ENCODE measurements at regions of chr22 and their contacts with region 1.

Region 1: GRCh38 chr22:46563381-46564083 is 26.1 kb upstream of the CELSR1 start:
- DNase-seq: no peak
- ATAC-seq: peak; percentile 97
- H3K4me3 ChIP-seq: no peak overlapping the region; the same call in 1 of the 2 replicates
- H3K27ac ChIP-seq: peak overlapping the region; percentile 50; the same call in 1 of the 2 replicates
- H3K4me1 ChIP-seq: peaks cover 12% of the 10 kb centered on the region
- H3K27me3 ChIP-seq: no peaks in the 10 kb centered on the region
- CTCF ChIP-seq: peak; percentile 80 to 93 (median 84)
- EP300 ChIP-seq: no peak
- POLR2A ChIP-seq: no peak
- RAD21 ChIP-seq: peak; percentile 81

Region 2: DNA sequence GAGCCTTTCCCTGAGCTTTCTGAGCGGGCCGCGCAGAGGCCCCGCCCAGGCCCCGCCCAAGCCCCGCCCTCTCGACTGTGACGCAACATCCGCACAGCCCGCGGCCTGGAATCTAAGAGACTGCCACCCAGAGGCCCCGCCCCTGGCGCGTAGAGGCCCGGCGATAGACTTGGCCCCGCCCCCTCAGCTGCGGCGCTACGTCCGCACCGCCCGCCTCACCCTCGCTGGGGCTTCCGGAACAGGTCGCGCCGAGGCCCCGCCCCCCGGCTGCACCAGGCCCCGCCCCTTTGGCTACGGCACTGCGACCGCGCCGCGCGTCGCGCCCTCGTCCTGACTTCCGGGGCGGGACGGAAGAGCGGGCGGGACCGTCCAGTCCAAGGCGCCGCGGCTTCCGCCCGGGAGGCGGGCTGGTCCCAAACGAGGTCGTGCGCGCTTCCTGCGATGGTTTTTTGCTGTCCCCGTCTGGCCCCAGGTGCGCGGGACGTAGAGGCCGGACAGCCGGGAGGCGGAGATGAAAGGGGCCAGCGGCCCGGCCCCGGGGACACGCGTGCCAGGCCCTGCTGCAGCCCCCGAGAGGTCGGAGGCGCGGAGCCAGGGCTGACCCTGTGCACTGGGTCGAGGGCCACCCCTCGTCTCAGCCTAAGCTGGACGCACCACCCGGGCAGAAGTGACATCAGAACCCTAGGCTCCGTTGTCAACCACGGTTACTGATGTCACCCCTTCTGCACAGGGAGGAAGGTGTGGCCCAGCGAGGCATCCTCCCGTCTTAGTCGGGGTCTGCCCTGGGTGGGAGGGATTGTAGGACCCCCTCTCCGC is 527.6 kb before region 1 on chr22:
- CTCF ChIA-PET with region 1: no interaction called
- POLR2A ChIA-PET with region 1: no interaction called
- RAD21 ChIA-PET with region 1: no interaction called
- SMC1A ChIA-PET with region 1: no interaction called
- in situ Hi-C with region 1: no loop called
- intact Hi-C with region 1: no loop called
- DNase-seq: peak; percentile 85
- ATAC-seq: peak; percentile 97
- H3K4me3 ChIP-seq: peak overlapping the region; percentile 91
- H3K27ac ChIP-seq: peak overlapping the region; percentile 88
- H3K4me1 ChIP-seq: peaks cover 9% of the 10 kb centered on the region
- H3K27me3 ChIP-seq: no peaks in the 10 kb centered on the region; a peak in 1 of 4 replicates
- CTCF ChIP-seq: no peak
- EP300 ChIP-seq: no peak; a peak in 1 of 4 replicates
- POLR2A ChIP-seq: peak; percentile 96
- RAD21 ChIP-seq: no peak

Region 3: DNA sequence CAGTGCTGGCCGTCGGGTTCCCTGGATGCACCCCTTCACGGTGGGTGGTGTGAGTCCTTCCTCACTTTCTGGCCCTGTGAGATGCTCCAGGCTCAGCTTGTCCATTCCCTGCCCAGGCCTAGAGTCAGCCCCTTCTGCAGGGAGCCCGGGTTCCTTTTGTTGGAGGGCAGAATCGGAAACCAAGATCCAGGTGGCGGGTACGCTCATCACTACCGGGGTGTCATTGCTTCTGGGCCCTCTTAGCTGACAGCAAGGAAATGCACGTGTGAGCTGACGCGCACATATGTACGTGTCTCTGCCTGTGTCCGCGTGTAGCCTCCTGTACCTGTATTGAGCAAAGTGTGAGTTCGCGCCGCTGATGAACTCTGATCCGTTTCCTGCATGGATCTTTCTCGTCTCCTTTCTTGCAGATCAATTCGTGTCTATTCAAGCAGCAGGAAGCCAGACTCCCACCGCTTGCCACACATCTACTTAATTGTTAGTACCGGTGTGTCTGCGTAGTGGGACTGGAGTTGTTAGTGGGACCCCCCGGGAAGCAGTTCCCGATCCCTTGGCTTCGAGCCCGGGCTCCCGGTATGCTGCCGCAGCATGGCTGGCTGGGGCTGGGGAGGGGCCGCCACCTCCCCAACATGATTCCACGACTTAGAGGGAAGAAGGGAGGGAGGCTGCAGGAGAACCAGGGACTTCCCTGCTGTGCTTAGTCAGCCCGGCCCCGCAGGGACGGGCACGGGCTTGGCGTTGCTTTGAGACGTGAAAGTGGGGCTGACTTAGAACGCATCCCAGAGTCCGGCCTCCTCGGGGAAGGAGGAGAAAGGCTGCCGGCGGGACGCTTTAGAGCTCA is 20.8 kb after region 1 on chr22:
- CTCF ChIA-PET with region 1: interaction called, 19 read pairs
- POLR2A ChIA-PET with region 1: interaction called, 3 read pairs
- RAD21 ChIA-PET with region 1: interaction called, 13 read pairs
- SMC1A ChIA-PET with region 1: interaction called, 13 read pairs
- in situ Hi-C with region 1: no loop called
- intact Hi-C with region 1: no loop called
- DNase-seq: no peak
- ATAC-seq: no peak
- H3K4me3 ChIP-seq: no peak overlapping the region
- H3K27ac ChIP-seq: no peak overlapping the region
- H3K4me1 ChIP-seq: peaks cover 50% of the 10 kb centered on the region
- H3K27me3 ChIP-seq: no peaks in the 10 kb centered on the region
- CTCF ChIP-seq: no peak
- EP300 ChIP-seq: no peak
- POLR2A ChIP-seq: no peak
- RAD21 ChIP-seq: no peak

Region 4: DNA sequence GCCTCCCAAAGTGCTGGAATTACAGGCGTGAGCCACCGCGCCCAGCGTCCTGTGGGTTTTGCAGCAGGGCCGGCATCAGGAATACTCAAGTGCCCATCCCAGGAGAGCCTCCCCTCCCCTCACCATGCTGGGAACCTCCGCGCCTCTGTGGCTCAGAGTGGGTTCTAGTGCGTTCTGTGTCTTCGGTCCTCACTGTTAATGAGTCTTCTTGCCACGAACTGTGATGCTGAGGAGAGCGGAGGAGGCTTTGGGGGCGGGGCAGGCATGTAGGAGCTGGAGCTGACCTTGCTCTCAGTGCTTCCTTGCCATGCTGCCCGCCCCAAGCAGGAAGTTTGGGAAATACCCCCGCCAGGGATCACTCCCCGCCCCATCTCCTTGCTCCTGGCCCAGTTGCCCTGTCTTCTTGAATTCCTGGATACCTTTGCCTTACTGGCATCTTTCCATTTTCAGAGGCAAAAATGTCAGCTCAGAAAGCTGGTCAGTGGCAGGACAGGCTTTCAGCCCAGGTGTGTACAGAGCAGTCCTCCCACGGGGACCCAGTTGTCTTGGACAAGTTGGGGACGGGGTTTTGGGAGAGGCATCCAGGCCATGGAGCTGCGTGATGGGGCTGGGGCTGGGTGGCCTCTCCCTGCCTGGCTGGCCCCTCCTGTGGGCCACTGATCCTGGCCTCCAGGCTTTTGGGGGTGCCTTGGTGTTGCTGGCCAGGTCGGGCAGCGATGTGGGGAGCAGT is 61.7 kb after region 1 on chr22:
- CTCF ChIA-PET with region 1: interaction called, 19 read pairs
- POLR2A ChIA-PET with region 1: no interaction called
- RAD21 ChIA-PET with region 1: interaction called, 4 read pairs
- SMC1A ChIA-PET with region 1: interaction called, 3 read pairs
- in situ Hi-C with region 1: no loop called
- intact Hi-C with region 1: no loop called
- DNase-seq: no peak
- ATAC-seq: no peak
- H3K4me3 ChIP-seq: no peak overlapping the region
- H3K27ac ChIP-seq: no peak overlapping the region
- H3K4me1 ChIP-seq: no peaks in the 10 kb centered on the region
- H3K27me3 ChIP-seq: no peaks in the 10 kb centered on the region
- CTCF ChIP-seq: no peak
- EP300 ChIP-seq: no peak
- POLR2A ChIP-seq: no peak
- RAD21 ChIP-seq: no peak

Region 5: GRCh38 chr22:46693634-46694415 is 130.3 kb after region 1 on chr22:
- CTCF ChIA-PET with region 1: interaction called, 11 read pairs
- POLR2A ChIA-PET with region 1: no interaction called
- RAD21 ChIA-PET with region 1: no interaction called
- SMC1A ChIA-PET with region 1: no interaction called
- in situ Hi-C with region 1: no loop called
- intact Hi-C with region 1: no loop called
- DNase-seq: no peak
- ATAC-seq: no peak
- H3K4me3 ChIP-seq: no peak overlapping the region
- H3K27ac ChIP-seq: no peak overlapping the region
- H3K4me1 ChIP-seq: no peaks in the 10 kb centered on the region
- H3K27me3 ChIP-seq: no peaks in the 10 kb centered on the region
- CTCF ChIP-seq: no peak
- EP300 ChIP-seq: no peak
- POLR2A ChIP-seq: no peak
- RAD21 ChIP-seq: no peak

Region 6: DNA sequence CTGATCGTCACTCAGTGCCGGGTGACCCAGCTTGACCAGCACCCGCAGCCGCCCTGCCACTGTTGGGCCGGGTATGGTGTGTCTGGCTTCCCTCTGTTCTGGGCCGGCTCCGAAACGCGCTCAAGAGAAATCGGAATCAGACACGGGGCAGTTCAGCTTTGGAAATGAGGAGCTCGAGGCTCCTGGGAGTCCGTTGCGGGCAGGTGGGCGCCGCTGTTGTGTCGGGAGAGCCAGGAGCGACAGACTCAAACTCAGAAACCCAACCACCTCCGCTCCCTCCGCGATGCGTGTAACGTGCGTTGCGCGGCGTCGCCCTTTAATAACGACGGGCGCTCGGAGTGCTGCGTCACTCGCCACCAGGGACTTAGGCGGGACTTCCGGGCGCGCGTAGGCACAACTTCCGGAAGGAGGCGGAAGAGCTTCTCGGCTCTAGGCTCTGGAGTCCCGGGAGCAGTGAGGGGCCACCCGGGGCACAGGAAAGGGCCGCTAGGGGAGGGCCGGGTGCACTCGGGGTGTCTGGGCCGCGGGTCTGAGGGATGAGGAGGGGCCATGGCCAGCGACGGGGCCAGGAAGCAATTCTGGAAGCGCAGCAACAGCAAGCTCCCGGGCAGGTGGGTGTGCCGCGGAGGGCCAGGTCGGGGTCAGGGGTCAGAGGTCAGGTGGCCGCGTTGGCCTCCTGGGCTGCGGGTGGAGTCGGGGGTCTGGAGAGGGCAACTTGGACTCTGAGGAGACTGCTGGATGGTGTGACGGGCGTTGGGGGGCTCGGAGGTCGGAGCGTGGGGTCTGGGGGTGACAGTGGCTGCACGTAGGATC is 198.9 kb after region 1 on chr22 and contains the start of gene TBC1D22A:
- CTCF ChIA-PET with region 1: interaction called, 35 read pairs
- POLR2A ChIA-PET with region 1: no interaction called
- RAD21 ChIA-PET with region 1: interaction called, 19 read pairs
- SMC1A ChIA-PET with region 1: interaction called, 14 read pairs
- in situ Hi-C with region 1: no loop called
- intact Hi-C with region 1: no loop called
- DNase-seq: no peak
- ATAC-seq: peak; percentile 80
- H3K4me3 ChIP-seq: peak within 1 kb of the TSS; percentile 97
- H3K27ac ChIP-seq: peak within 1 kb of the TSS; percentile 91
- H3K4me1 ChIP-seq: peaks cover 13% of the 10 kb centered on the region
- H3K27me3 ChIP-seq: no peaks in the 10 kb centered on the region
- CTCF ChIP-seq: 0 out of 6 replicates have a peak, but pooled peaks of 2 of the 3 experiments have one; percentile 0 to 9
- EP300 ChIP-seq: no peak
- POLR2A ChIP-seq: peak; percentile 99
- RAD21 ChIP-seq: no peak
- polyA plus RNA-seq, gene TBC1D22A: 0.63 to 2.6 TPM

Region 7: DNA sequence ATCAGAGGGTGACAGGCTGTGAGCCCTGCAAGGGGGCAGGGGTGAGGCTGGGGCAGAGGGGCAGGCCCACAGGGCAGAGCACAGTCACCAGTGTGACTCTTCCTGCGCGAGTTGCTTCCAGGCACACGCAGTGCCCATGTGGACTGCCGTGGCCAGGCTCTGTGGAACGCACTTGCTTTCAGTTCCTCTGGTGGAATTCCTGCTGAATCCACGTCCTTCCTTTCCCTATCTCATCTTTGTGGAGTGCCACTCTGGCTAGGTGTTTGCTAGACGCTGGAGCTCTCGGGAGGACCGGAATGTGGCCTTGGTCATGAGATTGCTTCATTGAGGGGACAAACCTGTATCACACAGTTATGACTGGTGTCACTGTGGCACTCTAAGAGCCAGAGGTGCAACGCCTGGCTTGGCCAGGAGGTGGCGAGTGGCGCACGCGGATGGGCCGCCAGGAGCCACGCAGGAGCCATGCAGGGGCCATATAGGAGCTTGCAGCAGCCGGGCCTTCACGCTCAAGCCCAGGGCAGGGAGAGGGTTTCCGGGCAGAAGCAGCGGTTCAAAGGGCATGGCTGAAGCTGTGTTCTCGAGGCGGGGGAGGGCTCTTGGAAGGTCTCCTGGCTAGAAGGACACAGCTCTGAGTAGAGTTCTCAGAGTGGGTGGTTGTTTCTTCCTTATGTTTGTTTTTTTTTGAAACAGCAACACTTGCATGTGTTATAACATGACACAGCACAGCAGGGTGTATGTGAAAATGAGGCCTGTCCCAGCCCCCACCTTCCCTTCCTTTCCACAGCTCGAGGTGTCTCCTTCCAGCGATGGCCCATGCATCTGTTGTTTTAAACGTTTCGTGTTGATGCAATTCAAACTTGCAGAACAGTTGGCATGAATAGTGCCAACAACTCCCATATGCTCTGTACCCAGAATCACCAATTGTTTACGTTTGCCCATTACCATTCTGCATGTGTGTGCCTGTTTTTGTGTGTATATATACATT is 235.1 kb after region 1 on chr22:
- CTCF ChIA-PET with region 1: interaction called, 44 read pairs
- POLR2A ChIA-PET with region 1: no interaction called
- RAD21 ChIA-PET with region 1: interaction called, 28 read pairs
- SMC1A ChIA-PET with region 1: interaction called, 16 read pairs
- in situ Hi-C with region 1: no loop called
- intact Hi-C with region 1: loop called (anchors 1 kb)
- DNase-seq: no peak
- ATAC-seq: peak; percentile 93
- H3K4me3 ChIP-seq: no peak overlapping the region
- H3K27ac ChIP-seq: no peak overlapping the region
- H3K4me1 ChIP-seq: no peaks in the 10 kb centered on the region
- H3K27me3 ChIP-seq: no peaks in the 10 kb centered on the region
- CTCF ChIP-seq: peak; percentile 70 to 87 (median 87)
- EP300 ChIP-seq: no peak
- POLR2A ChIP-seq: no peak
- RAD21 ChIP-seq: peak; percentile 63